ENCODE measurements at regions of chr7 and their contacts with region 1.

Region 1: DNA sequence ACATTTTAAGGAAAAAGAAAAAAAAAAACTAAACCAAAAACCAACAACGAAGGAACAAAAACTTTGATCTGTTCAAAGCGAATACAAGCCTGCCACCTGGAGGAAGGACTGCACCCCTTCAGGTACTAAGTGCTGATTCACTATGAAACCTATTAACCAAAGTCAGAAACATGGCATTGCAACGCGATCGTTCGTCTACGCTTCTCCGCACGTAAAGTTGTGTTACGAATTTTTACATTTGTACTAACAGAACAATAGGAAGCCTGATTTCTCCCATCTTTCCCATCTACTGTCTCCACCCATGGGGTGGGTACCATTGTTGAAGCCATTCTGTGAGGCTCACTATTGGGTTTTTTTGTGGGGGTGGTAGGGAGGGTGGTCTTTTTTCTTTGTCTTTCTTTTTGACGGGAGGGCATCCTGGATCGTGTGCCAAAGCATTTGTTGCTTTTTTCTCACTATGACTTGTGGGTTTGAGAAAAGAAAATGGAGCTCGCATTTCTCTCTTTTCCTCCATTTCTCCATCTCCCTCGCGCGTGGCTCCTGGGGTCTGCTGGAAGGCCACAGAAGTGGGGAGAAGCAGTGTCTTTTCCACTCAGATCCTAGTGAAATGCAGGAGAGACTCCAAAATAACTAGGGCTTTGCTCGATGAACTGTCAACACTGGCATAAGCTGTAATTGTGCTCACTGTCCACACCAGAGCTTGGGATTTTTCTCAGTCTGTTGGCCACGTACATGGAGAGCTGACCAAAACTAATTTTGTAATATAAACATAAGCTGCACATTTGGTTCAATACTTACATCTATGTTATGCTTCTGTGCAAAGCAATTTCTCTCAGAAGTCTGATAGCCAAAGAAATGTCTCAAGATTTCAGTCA is 100.9 kb upstream of the YAE1 start:
- DNase-seq: peak in 2 of 3 donors; percentile 40 to 66
- ATAC-seq: peak; percentile 85
- H3K4me3 ChIP-seq: no peak overlapping the region
- H3K4me1 ChIP-seq: peaks cover 11% of the 10 kb centered on the region
- CTCF ChIP-seq: peak; percentile 53

Region 2: GRCh38 chr7:38796626-38797501 is 668.4 kb before region 1 on chr7:
- intact Hi-C with region 1: loop called in 1 of 2 experiments (anchors 10 kb)
- DNase-seq: peak in 1 of 3 donors; percentile 73
- ATAC-seq: peak; percentile 56
- H3K4me3 ChIP-seq: no peak overlapping the region
- H3K4me1 ChIP-seq: no peaks in the 10 kb centered on the region
- CTCF ChIP-seq: peak; percentile 24

Region 3: DNA sequence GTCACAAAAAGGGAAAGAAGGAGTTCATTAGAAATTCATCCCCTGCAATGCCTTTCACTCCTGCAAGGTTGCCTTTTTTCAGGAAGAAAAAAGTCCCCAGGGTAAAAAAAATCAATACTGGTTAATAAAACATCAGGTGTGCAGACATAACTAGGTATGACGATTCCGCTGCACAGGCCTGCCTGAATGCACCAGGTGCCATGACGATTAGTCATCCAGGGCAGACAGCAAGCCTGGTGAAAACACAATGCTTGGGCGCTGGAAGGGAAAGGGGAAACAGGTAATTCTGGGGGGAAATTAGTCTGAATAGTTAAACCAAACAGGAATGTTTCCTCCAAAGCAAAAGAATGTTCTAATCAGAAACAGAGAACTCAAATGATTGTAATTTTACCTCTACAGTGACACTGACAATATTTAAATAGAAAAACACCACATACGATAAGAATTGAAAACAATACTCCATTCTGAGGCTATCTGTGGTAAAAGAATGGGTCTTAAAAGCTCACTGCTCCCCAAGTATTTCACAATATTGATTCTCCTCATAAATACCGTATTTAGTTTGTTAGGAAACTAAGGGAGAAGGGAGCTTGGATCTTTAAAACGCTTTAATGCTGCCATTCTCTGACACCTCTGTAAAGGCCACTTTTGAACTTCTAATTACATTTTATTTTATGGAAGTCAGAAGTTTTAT is 601.5 kb before region 1 on chr7:
- intact Hi-C with region 1: no loop called
- DNase-seq: no peak
- ATAC-seq: no peak
- H3K4me3 ChIP-seq: no peak overlapping the region
- H3K4me1 ChIP-seq: no peaks in the 10 kb centered on the region
- CTCF ChIP-seq: no peak

Region 4: GRCh38 chr7:38932509-38933168 is 532.7 kb before region 1 on chr7:
- intact Hi-C with region 1: loop called in 1 of 2 experiments (anchors 5 kb)
- DNase-seq: peak in 2 of 3 donors; percentile 72 to 83
- ATAC-seq: peak; percentile 36
- H3K4me3 ChIP-seq: no peak overlapping the region
- H3K4me1 ChIP-seq: no peaks in the 10 kb centered on the region
- CTCF ChIP-seq: peak; percentile 71

Region 5: DNA sequence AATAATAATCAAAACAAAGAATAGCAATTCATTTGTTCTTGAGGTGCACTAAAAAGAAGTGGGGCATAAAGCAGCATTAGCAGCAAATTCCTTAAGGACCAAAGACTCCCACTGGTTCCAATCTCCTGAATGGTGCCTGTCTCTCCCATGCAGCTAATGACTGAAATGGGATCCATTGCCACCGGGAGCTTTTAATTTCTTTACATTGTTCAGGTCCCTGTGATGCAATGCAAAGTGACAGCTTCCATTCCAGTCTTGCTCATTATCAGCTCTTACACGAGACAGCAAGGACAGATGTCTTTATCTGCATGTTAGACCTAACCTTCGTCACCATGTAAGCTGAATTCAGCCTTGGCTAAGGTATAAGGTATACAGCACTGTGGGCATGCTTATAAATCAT is 339.4 kb before region 1 on chr7:
- intact Hi-C with region 1: no loop called
- DNase-seq: no peak
- ATAC-seq: no peak
- H3K4me3 ChIP-seq: no peak overlapping the region
- H3K4me1 ChIP-seq: no peaks in the 10 kb centered on the region
- CTCF ChIP-seq: no peak

Region 6: GRCh38 chr7:40221836-40222235 is 756.5 kb after region 1 on chr7:
- intact Hi-C with region 1: no loop called
- DNase-seq: no peak
- ATAC-seq: peak; percentile 23
- H3K4me3 ChIP-seq: no peak overlapping the region
- H3K4me1 ChIP-seq: peaks cover 4% of the 10 kb centered on the region
- CTCF ChIP-seq: no peak

Region 7: DNA sequence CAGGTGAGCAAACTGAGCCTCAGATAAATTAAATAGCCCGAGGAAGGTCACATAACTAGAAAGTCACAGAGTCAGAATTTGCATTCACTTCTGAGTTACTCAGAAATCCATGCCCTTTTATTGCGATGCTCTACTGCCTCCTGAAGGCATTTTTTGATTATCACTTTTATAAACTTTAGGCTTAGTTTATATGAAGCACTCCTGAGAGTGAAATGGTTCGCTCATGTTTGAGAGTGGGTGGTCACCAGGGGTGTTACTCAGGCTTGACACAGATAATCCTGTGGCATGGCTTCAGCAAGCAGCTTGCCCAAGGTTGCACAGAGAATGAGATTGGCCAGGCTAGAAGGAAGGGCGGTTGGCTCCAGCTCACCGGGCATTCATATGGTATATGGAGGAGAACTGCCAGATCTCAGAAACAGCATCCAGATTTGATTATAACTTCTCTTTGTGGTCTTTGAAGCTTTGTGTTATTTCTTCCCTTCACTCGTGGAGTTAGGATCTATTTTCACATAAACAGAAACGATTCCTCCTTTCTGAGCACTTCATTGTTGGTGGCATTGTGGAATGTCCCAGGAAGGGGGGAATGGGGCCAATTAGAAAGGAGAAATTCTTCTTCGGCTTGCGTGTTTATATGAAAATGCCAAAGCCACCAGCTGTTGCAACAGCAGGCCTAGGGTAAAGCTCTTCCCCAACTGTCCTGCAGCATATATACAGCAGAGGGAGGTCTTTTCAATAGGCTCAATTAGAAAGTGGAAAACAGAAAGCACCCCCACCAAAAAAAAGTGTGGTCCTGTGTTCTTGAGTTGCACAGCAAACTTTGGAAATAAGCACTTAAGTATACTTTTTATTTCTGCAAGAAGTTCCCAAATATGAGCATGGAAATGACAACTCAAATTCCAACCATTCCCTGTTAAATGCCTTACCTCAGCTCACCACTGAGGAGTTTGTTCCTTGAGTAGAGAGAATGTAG is 1298.3 kb after region 1 on chr7:
- intact Hi-C with region 1: no loop called
- DNase-seq: no peak
- ATAC-seq: peak; percentile 12
- H3K4me3 ChIP-seq: no peak overlapping the region
- H3K4me1 ChIP-seq: peaks cover 7% of the 10 kb centered on the region
- CTCF ChIP-seq: no peak

Measured in mucosa of descending colon (tissue), 3 donors.